ENCODE measurements at regions of chr1 and their contacts with region 1.

Region 1: DNA sequence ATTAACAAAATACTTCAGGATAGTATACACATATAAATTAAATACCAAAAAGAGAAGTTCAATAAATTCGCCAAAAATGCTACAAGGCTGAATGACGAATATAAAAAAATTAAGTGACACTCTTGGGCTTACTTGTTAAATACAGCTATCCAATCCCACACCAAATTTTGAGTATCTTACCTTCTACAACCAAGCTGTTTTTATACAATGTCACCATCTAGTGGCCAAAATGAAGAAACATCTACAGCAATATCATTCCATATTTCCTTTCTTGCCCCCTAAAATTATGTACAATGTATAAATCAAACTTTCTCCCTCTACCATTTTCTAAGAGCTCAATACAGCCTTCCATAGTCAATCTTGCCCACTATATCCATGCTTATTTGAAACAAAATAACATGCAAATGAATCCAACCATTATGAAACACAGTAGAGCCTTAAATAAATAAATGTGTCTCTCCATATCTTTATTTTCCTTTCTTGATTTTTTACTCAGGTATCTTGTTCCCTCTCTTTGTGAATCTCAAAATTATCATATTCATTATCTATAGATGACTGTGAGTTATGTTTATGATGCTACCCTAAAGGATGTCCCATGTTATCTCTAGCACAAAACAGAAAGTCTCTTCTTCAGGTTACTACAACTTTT is 86.3 kb downstream of the ACBD6 start:
- DNase-seq: no peak
- ATAC-seq: no peak
- H3K4me3 ChIP-seq: no peak overlapping the region
- H3K27ac ChIP-seq: no peak overlapping the region
- H3K4me1 ChIP-seq: no peaks in the 10 kb centered on the region
- H3K27me3 ChIP-seq: no peaks in the 10 kb centered on the region
- CTCF ChIP-seq: peak; percentile 53

Region 2: DNA sequence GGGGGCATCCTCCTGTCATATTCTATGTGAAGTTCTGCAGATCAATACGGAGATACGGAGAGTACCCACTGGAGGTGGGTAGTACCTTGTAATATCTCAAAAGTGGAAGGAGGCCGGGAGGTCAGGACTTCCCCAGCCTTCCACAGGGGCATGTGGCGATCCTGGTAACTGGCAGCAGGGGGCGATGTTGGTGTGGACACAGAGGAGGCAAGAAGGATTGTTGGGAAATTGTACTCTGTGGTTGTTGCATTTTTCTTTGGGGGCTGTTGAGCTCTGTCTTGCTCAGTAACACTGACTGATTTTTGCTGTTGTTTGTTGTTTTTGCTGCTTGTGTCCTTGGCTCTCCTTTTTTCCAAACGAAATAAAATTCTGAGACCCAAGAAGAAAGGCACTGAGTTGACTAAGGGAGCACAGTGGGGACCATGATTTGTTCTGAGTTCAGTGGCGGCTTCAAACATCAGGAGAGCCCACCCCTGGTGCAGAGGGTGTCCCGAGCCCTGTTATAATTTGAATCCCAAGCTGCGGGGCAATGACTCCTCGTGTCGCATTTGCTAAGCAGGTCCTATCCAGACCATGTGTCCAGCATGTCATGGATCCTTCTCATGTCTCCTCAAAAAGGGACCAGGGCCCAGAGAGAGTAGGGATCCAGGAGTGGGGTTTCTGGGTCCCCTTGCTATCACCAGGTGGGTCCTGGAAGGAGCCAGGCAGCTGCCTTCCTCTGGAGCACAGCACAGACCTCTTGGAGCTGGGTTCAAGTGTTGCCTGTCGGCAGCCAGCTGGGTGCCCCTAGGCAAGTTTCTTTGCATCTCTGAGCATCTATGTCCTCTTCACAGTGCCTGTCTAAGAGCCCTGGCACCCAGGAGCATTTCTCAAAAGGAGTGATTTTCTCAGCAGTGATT is 163.2 kb before region 1 on chr1:
- intact Hi-C with region 1: loop called (anchors 2 to 10 kb)
- DNase-seq: peak; percentile 66 to 83
- ATAC-seq: peak; percentile 65 to 85 (median 75)
- H3K4me3 ChIP-seq: no peak overlapping the region
- H3K27ac ChIP-seq: no peak overlapping the region
- H3K4me1 ChIP-seq: no peaks in the 10 kb centered on the region
- H3K27me3 ChIP-seq: peaks cover 0 to 39% (median 11%) of the 10 kb centered on the region in 3 donors
- CTCF ChIP-seq: peak; percentile 80

Region 3: GRCh38 chr1:180397175-180397574 is 18.9 kb before region 1 on chr1:
- intact Hi-C with region 1: no loop called
- DNase-seq: no peak
- ATAC-seq: no peak
- H3K4me3 ChIP-seq: no peak overlapping the region
- H3K27ac ChIP-seq: no peak overlapping the region
- H3K4me1 ChIP-seq: no peaks in the 10 kb centered on the region
- H3K27me3 ChIP-seq: no peaks in the 10 kb centered on the region
- CTCF ChIP-seq: no peak